GM12878 (cell line): ENCODE measurements at regions of chr1 and their contacts with region 1.

Region 1: DNA sequence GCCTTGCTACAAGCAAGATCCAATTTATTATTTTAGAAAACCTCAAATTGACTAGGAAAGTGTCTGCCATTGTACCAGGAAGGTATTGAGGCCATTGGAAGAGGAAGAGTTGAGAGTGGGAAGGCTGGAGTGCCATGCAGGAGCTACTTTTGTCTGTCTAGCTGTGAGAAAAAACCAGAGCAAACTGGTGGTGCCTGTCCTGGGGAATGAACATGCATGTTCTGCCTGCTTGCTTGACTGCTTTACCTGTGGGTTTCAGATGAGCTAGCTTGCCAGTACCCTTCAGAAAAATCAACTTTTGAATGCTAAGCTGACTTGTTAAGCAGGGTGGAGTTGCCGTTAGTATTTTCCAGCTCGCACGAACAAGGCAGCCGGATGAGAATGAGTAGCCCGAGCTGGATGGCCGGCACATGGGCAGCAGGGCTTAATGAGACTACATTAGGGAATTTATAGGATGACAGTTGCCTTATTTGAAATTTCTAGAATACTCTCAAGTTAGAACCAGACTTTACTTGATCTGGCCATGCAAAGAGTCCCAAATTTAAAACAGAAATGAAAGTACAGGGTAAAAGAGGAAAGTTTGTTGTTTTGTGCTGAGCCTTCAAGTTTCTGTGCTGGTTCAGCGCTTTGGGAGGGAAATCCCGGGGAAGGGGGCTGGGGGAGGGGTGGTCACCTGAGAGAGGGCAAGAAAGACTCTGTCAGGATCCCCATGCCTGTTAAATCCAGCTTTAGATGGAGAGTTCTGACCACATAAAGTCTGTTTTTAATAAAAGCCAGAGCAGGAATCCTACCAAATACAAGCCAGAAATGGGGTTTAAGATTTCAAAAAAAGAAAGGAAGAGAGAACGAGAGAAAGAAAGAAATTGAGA is 29.6 kb upstream of the C1orf105 start:
- DNase-seq: peak; percentile 96
- ATAC-seq: peak; percentile 82
- H3K4me3 ChIP-seq: peak overlapping the region; percentile 11; the same call in 1 of the 2 replicates
- H3K27ac ChIP-seq: peak overlapping the region; percentile 98
- H3K4me1 ChIP-seq: peaks cover 56% of the 10 kb centered on the region
- H3K27me3 ChIP-seq: no peaks in the 10 kb centered on the region
- CTCF ChIP-seq: no peak
- EP300 ChIP-seq: no peak
- POLR2A ChIP-seq: peak; percentile 32; the same call in 1 of the 2 replicates
- RAD21 ChIP-seq: peak; percentile 34; the same call in 1 of the 2 replicates

Region 2: GRCh38 chr1:172215006-172215405 is 175.9 kb before region 1 on chr1:
- CTCF ChIA-PET with region 1: no interaction called
- POLR2A ChIA-PET with region 1: no interaction called
- RAD21 ChIA-PET with region 1: no interaction called
- SMC1A ChIA-PET with region 1: no interaction called
- in situ Hi-C with region 1: no loop called
- intact Hi-C with region 1: no loop called
- DNase-seq: no peak
- ATAC-seq: no peak
- H3K4me3 ChIP-seq: no peak overlapping the region
- H3K27ac ChIP-seq: no peak overlapping the region
- H3K4me1 ChIP-seq: no peaks in the 10 kb centered on the region
- H3K27me3 ChIP-seq: no peaks in the 10 kb centered on the region
- CTCF ChIP-seq: no peak
- EP300 ChIP-seq: no peak
- POLR2A ChIP-seq: no peak
- RAD21 ChIP-seq: no peak

Region 3: GRCh38 chr1:172343240-172344160 is 47.4 kb before region 1 on chr1:
- CTCF ChIA-PET with region 1: interaction called, 153 read pairs
- POLR2A ChIA-PET with region 1: interaction called, 14 read pairs
- RAD21 ChIA-PET with region 1: interaction called, 364 read pairs
- SMC1A ChIA-PET with region 1: interaction called, 413 read pairs
- in situ Hi-C with region 1: loop called (anchors 5 kb)
- intact Hi-C with region 1: loop called (anchors 1 kb)
- DNase-seq: no peak
- ATAC-seq: peak; percentile 37
- H3K4me3 ChIP-seq: no peak overlapping the region
- H3K27ac ChIP-seq: peak overlapping the region; percentile 98
- H3K4me1 ChIP-seq: peaks cover 58% of the 10 kb centered on the region
- H3K27me3 ChIP-seq: no peaks in the 10 kb centered on the region
- CTCF ChIP-seq: no peak
- EP300 ChIP-seq: peak in 1 of 2 experiments; percentile 13; a peak in 1 of 4 replicates
- POLR2A ChIP-seq: no peak
- RAD21 ChIP-seq: no peak

Region 4: GRCh38 chr1:172351761-172352161 is 39.2 kb before region 1 on chr1:
- CTCF ChIA-PET with region 1: interaction called, 8 read pairs
- POLR2A ChIA-PET with region 1: interaction called, 17 read pairs
- RAD21 ChIA-PET with region 1: interaction called, 394 read pairs
- SMC1A ChIA-PET with region 1: interaction called, 458 read pairs
- in situ Hi-C with region 1: no loop called
- intact Hi-C with region 1: no loop called
- DNase-seq: no peak
- ATAC-seq: no peak
- H3K4me3 ChIP-seq: no peak overlapping the region
- H3K27ac ChIP-seq: no peak overlapping the region
- H3K4me1 ChIP-seq: peaks cover 4% of the 10 kb centered on the region
- H3K27me3 ChIP-seq: no peaks in the 10 kb centered on the region
- CTCF ChIP-seq: no peak
- EP300 ChIP-seq: no peak
- POLR2A ChIP-seq: no peak
- RAD21 ChIP-seq: no peak

Region 5: GRCh38 chr1:172373864-172374263 is 17.1 kb before region 1 on chr1:
- CTCF ChIA-PET with region 1: interaction called, 11 read pairs
- POLR2A ChIA-PET with region 1: interaction called, 6 read pairs
- RAD21 ChIA-PET with region 1: interaction called, 15 read pairs
- SMC1A ChIA-PET with region 1: interaction called, 345 read pairs
- in situ Hi-C with region 1: no loop called
- intact Hi-C with region 1: no loop called
- DNase-seq: no peak
- ATAC-seq: no peak; the same call in 2 of the 3 replicates
- H3K4me3 ChIP-seq: no peak overlapping the region
- H3K27ac ChIP-seq: no peak overlapping the region
- H3K4me1 ChIP-seq: peaks cover 4% of the 10 kb centered on the region; the same call in 1 of the 2 replicates
- H3K27me3 ChIP-seq: no peaks in the 10 kb centered on the region
- CTCF ChIP-seq: no peak
- EP300 ChIP-seq: no peak
- POLR2A ChIP-seq: no peak
- RAD21 ChIP-seq: no peak

Region 6: GRCh38 chr1:172487550-172487949 is 96.6 kb after region 1 on chr1:
- CTCF ChIA-PET with region 1: no interaction called
- POLR2A ChIA-PET with region 1: no interaction called
- RAD21 ChIA-PET with region 1: no interaction called
- SMC1A ChIA-PET with region 1: no interaction called
- in situ Hi-C with region 1: no loop called
- intact Hi-C with region 1: no loop called
- DNase-seq: no peak
- ATAC-seq: no peak
- H3K4me3 ChIP-seq: no peak overlapping the region
- H3K27ac ChIP-seq: no peak overlapping the region
- H3K4me1 ChIP-seq: no peaks in the 10 kb centered on the region
- H3K27me3 ChIP-seq: peaks cover 0 to 3% of the 10 kb centered on the region in 2 experiments; a peak in 1 of 4 replicates
- CTCF ChIP-seq: no peak
- EP300 ChIP-seq: no peak
- POLR2A ChIP-seq: no peak
- RAD21 ChIP-seq: no peak

Region 7: GRCh38 chr1:172566196-172566997 is 175.5 kb after region 1 on chr1:
- CTCF ChIA-PET with region 1: no interaction called
- POLR2A ChIA-PET with region 1: no interaction called
- RAD21 ChIA-PET with region 1: no interaction called
- SMC1A ChIA-PET with region 1: no interaction called
- in situ Hi-C with region 1: no loop called
- intact Hi-C with region 1: no loop called
- DNase-seq: no peak
- ATAC-seq: no peak
- H3K4me3 ChIP-seq: no peak overlapping the region
- H3K27ac ChIP-seq: no peak overlapping the region
- H3K4me1 ChIP-seq: no peaks in the 10 kb centered on the region
- H3K27me3 ChIP-seq: no peaks in the 10 kb centered on the region
- CTCF ChIP-seq: no peak
- EP300 ChIP-seq: no peak
- POLR2A ChIP-seq: no peak
- RAD21 ChIP-seq: no peak

Region 8: GRCh38 chr1:172588296-172589291 is 197.7 kb after region 1 on chr1:
- CTCF ChIA-PET with region 1: no interaction called
- POLR2A ChIA-PET with region 1: no interaction called
- RAD21 ChIA-PET with region 1: no interaction called
- SMC1A ChIA-PET with region 1: no interaction called
- in situ Hi-C with region 1: no loop called
- intact Hi-C with region 1: no loop called
- DNase-seq: no peak
- ATAC-seq: peak; percentile 48
- H3K4me3 ChIP-seq: no peak overlapping the region
- H3K27ac ChIP-seq: no peak overlapping the region; the same call in 1 of the 2 replicates
- H3K4me1 ChIP-seq: peaks cover 4% of the 10 kb centered on the region; the same call in 1 of the 2 replicates
- H3K27me3 ChIP-seq: no peaks in the 10 kb centered on the region
- CTCF ChIP-seq: no peak
- EP300 ChIP-seq: no peak
- POLR2A ChIP-seq: no peak
- RAD21 ChIP-seq: no peak